ENCODE measurements at regions of chr18 and their contacts with region 1.

Region 1: DNA sequence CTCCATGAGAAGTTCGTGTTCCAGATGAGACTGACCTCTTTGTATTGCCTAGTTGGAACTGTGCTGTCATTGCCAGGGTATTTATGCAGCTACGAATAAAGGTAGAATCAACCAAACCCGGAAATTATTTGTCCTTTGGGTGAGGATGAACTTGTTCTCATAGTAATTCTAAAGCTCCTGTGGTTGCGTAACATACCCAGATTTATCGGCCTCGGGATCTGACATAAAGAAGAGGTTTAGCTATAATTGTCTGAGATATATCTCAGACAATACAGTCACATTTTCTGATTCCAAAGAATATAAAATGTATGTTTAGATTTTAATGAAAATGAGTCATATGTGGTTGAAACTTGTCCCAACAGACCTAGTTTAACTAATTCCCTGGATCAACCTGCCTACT is 628.7 kb upstream of the LINC00305 start:
- DNase-seq: no peak
- H3K4me3 Mint-ChIP-seq: no peak overlapping the region
- H3K27ac Mint-ChIP-seq: no peak overlapping the region
- H3K4me1 Mint-ChIP-seq: no peaks in the 10 kb centered on the region
- H3K27me3 Mint-ChIP-seq: no peaks in the 10 kb centered on the region
- CTCF ChIP-seq: no peak

Region 2: DNA sequence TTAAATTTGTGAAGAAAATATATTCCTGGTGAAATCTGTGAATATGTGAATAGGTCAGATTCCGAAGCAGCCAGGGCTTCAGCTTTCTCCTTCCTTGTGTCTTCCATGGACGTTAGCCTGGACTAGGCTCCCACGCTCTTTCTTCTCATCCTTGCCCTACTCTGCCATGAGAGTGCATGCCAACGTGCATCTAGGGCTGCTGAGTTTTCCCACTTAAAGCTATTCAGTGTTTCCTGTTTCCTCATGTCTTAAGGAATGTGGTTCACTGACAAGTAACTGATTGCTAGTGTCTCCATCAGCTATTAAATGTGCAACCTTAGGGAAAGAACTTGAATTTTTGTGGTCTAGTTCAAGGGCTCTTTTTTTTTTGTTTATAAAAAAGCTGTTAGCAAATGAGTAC is 13.7 kb after region 1 on chr18:
- CTCF ChIA-PET with region 1: interaction called, 3 read pairs
- intact Hi-C with region 1: loop called (anchors 2 kb)
- DNase-seq: no peak
- H3K4me3 Mint-ChIP-seq: no peak overlapping the region
- H3K27ac Mint-ChIP-seq: no peak overlapping the region
- H3K4me1 Mint-ChIP-seq: peaks cover 9% of the 10 kb centered on the region
- H3K27me3 Mint-ChIP-seq: no peaks in the 10 kb centered on the region
- CTCF ChIP-seq: no peak